Heart right ventricle (tissue), 16 donors: ENCODE measurements at regions of chr7 and their contacts with region 1.

Region 1: DNA sequence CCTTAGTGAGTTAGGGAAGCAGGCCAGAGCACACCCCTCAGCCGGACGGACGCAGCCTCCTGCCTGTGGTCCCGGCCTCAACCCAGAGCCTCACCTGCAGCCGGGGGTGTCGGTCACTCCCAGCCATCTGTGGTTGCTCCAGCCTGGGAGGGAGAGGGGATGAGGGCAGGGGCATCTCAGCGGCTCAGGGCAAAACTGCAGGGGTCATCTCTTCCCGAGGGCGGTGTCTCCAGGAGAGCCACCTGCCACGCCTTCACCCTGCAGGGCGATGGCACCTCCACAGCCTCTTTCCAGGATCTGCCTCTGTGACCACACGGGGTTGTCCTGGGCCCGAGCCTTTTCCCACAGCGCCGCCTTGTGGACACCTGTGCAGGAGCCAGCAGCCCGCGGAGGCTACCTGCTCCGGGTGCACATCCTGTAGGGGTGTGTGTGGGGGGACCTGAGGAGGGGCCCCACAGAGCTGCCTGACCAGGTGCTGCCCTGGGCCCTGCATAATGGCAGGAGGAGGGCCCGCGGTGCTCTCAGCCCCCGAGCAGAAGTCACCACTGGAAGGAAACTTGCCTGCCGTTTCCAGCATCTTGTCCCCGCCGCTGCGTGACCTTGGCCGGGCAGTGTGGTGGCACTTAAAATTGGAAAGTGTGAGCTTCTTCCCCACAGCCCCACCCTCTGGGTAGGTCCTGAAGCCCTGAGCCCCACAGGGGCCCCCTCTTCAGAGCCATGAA is 21.6 kb upstream of the AP5Z1 start:
- DNase-seq: peak; percentile 76 to 84
- ATAC-seq: peak; percentile 78 to 89 (median 84)
- H3K4me3 ChIP-seq: no peak overlapping the region
- H3K27ac ChIP-seq: no peak overlapping the region
- H3K4me1 ChIP-seq: peaks cover 0 to 21% (median 16%) of the 10 kb centered on the region in 9 donors
- H3K27me3 ChIP-seq: no peaks in the 10 kb centered on the region
- CTCF ChIP-seq: peak; percentile 68 to 91 (median 87)

Region 2: DNA sequence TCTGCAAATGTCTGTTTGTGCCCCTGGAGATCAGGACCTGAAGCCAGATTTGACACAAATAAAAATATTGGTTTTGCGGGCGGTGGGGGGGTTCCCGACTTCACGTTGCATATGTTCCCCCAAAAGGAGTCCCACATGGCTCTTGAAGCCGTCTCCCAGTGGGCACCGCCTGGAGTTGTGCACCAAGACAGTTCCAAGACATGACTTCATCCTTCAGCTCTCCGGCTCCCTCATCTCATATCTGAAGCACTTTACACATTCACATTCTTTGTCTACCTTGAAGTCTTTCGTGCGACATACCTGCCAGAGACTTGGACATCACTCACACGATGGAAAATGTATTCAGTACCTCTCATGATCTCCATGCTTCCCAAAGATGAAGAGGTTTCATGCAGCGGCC is 434.6 kb before region 1 on chr7:
- intact Hi-C with region 1: no loop called
- DNase-seq: no peak
- ATAC-seq: no peak
- H3K4me3 ChIP-seq: no peak overlapping the region
- H3K27ac ChIP-seq: no peak overlapping the region
- H3K4me1 ChIP-seq: no peaks in the 10 kb centered on the region
- H3K27me3 ChIP-seq: no peaks in the 10 kb centered on the region
- CTCF ChIP-seq: no peak

Region 3: GRCh38 chr7:4610768-4611467 is 143.0 kb before region 1 on chr7:
- intact Hi-C with region 1: loop called in 5 of 10 experiments (anchors 1 to 10 kb)
- DNase-seq: peak in 1 of 2 donors; percentile 66
- ATAC-seq: peak; percentile 52 to 78 (median 68)
- H3K4me3 ChIP-seq: no peak overlapping the region
- H3K27ac ChIP-seq: no peak overlapping the region
- H3K4me1 ChIP-seq: peaks cover 0 to 23% (median 15%) of the 10 kb centered on the region in 9 donors
- H3K27me3 ChIP-seq: peaks cover 0 to 8% (median 0%) of the 10 kb centered on the region in 7 donors
- CTCF ChIP-seq: peak; percentile 57 to 89 (median 83)

Region 4: DNA sequence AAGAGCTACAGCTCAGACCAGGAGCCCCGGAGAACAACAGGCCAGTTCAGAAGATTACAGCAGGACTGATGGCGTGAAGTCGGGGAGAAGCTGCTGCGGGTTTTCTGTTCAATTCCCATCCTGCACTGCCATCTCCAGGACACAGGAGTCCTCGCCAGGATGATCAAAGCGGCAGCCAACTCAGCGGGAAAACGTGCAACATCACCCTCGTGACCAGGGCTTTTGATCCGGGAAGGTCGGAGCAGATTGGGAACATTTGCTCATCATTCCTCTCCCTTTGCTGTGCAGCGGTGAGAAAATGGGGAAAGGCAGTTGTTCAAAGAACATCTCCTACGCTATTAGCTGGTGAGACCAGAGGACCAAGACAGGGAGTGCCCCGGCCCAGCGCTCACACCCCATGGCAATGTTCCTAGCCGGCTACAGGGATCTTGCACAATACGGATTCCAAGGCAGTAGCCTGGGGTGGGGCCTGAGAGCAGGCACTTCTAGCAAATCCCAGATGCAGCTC is 122.2 kb before region 1 on chr7:
- intact Hi-C with region 1: loop called in 1 of 10 experiments (anchors 5 kb)
- DNase-seq: peak; percentile 64 to 77
- ATAC-seq: peak; percentile 89 to 98 (median 94)
- H3K4me3 ChIP-seq: peak overlapping the region in 8 of 10 donors; percentile 17 to 44 (median 28)
- H3K27ac ChIP-seq: peak overlapping the region in 1 of 10 donors; percentile 17
- H3K4me1 ChIP-seq: peaks cover 0 to 13% (median 10%) of the 10 kb centered on the region in 9 donors
- H3K27me3 ChIP-seq: peaks cover 0 to 2% (median 0%) of the 10 kb centered on the region in 7 donors
- CTCF ChIP-seq: peak; percentile 37 to 79 (median 66)

Region 5: DNA sequence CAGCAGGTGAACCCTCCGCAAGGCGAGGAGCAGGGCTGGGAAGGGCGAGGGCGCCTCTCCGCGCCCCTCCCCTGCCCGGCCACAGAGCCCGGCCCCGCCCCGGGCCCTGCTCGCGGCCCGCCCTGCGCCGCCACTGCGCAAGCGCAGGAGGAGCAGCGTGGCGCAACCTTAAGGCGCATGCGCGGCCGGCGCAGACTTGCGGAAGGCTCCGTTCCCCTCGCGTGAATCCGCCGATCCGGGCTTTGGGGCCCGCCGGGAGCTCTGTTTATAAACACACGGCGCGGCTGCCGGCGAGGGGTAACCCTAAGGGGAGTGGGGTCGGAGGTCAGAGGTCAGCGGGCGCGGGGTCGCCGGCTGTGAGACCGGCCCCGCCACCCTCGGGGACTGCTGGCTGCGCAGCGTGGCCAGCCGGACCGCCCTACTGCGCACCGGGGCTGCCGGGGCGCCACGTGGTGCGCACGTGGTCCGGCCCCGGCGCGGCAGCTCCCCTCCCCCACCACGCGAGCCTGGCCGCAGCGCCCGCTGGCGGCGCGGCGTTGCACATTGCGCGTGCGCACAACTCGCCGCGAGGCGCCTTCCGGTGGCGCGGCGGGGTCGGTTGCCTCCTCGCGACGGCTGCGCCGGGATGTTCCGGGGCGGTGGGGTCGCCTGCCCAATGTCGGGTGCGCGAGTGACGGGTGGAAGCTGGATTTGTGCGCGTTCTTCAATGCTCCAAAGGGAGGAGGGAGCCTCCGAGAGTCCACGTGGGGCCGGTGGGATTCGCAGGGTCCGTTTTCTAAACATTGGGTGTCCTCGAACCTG is 112.0 kb before region 1 on chr7:
- intact Hi-C with region 1: loop called in 3 of 10 experiments (anchors 2 to 5 kb)
- DNase-seq: peak; percentile 94 to 97
- ATAC-seq: peak; percentile 96 to 98 (median 97)
- H3K4me3 ChIP-seq: peak overlapping the region; percentile 15 to 78 (median 64)
- H3K27ac ChIP-seq: peak overlapping the region; percentile 37 to 95 (median 86)
- H3K4me1 ChIP-seq: peaks cover 0 to 16% (median 10%) of the 10 kb centered on the region in 9 donors
- H3K27me3 ChIP-seq: no peaks in the 10 kb centered on the region
- CTCF ChIP-seq: peak; percentile 17 to 81 (median 41)